ENCODE measurements at regions of chr20 and their contacts with region 1.

Region 1: GRCh38 chr20:5529331-5530148 is 212.8 kb upstream of the PROKR2 start:
- DNase-seq: peak; percentile 58 to 89 (median 83)
- ATAC-seq: peak; percentile 87 to 90 (median 88)
- H3K4me3 ChIP-seq: no peak overlapping the region
- H3K4me3 Mint-ChIP-seq: peak overlapping the region in 2 of 3 donors; percentile 41 to 67
- H3K27ac ChIP-seq: no peak overlapping the region
- H3K27ac Mint-ChIP-seq: peak overlapping the region; percentile 45 to 57
- H3K4me1 ChIP-seq: peaks cover 5 to 12% of the 10 kb centered on the region in 2 experiments
- H3K4me1 Mint-ChIP-seq: peaks cover 17 to 23% (median 20%) of the 10 kb centered on the region in 3 donors
- H3K27me3 ChIP-seq: no peaks in the 10 kb centered on the region
- H3K27me3 Mint-ChIP-seq: no peaks in the 10 kb centered on the region

Region 2: GRCh38 chr20:4808872-4809271 is 720.7 kb before region 1 on chr20:
- CTCF ChIA-PET with region 1: no interaction called
- POLR2A ChIA-PET with region 1: interaction called in 1 of 2 experiments, 10 read pairs
- DNase-seq: peak in 1 of 35 experiments; percentile 9
- ATAC-seq: no peak
- H3K4me3 ChIP-seq: no peak overlapping the region
- H3K4me3 Mint-ChIP-seq: peak overlapping the region in 2 of 3 donors; percentile 52 to 81
- H3K27ac ChIP-seq: peak overlapping the region; percentile 4
- H3K27ac Mint-ChIP-seq: peak overlapping the region; percentile 97 to 98
- H3K4me1 ChIP-seq: peaks cover 57 to 68% of the 10 kb centered on the region in 2 experiments
- H3K4me1 Mint-ChIP-seq: peaks cover 78 to 88% (median 84%) of the 10 kb centered on the region in 3 donors
- H3K27me3 ChIP-seq: no peaks in the 10 kb centered on the region
- H3K27me3 Mint-ChIP-seq: no peaks in the 10 kb centered on the region

Region 3: DNA sequence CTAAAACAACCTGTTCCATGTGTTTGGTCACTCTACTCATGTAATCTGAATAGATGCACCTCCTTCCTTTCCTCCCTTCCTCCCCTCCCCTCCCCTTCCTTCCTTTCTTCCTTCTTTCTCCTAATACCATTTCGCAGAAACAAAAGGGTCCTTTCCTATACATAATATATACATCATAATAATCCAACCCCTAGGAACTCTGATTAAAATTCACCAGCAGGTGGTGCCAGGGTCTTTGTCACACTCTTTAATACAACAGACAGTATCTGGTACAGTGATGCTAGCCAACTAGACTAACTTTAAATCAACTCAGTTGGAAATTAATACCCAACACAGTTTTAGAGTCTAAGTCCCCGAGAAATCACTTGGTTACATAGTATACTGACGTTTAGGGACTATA is 39.5 kb after region 1 on chr20:
- CTCF ChIA-PET with region 1: interaction called, 3 to 18 read pairs
- POLR2A ChIA-PET with region 1: no interaction called
- DNase-seq: peak in 33 of 35 experiments; percentile 7 to 76 (median 47)
- ATAC-seq: peak; percentile 74 to 82 (median 78)
- H3K4me3 ChIP-seq: no peak overlapping the region
- H3K4me3 Mint-ChIP-seq: peak overlapping the region in 1 of 3 donors; percentile 65
- H3K27ac ChIP-seq: no peak overlapping the region
- H3K27ac Mint-ChIP-seq: peak overlapping the region; percentile 18 to 80
- H3K4me1 ChIP-seq: peaks cover 0 to 22% of the 10 kb centered on the region in 2 experiments
- H3K4me1 Mint-ChIP-seq: peaks cover 21 to 36% (median 35%) of the 10 kb centered on the region in 3 donors
- H3K27me3 ChIP-seq: no peaks in the 10 kb centered on the region
- H3K27me3 Mint-ChIP-seq: no peaks in the 10 kb centered on the region

Region 4: GRCh38 chr20:5788385-5788895 is 258.9 kb after region 1 on chr20:
- CTCF ChIA-PET with region 1: interaction called, 18 to 44 read pairs
- POLR2A ChIA-PET with region 1: interaction called in 1 of 2 experiments, 7 read pairs
- DNase-seq: peak; percentile 19 to 93 (median 73)
- ATAC-seq: peak; percentile 87 to 99 (median 96)
- H3K4me3 ChIP-seq: no peak overlapping the region
- H3K4me3 Mint-ChIP-seq: no peak overlapping the region
- H3K27ac ChIP-seq: no peak overlapping the region
- H3K27ac Mint-ChIP-seq: peak overlapping the region in 1 of 2 donors; percentile 2
- H3K4me1 ChIP-seq: no peaks in the 10 kb centered on the region
- H3K4me1 Mint-ChIP-seq: peaks cover 0 to 15% (median 8%) of the 10 kb centered on the region in 3 donors
- H3K27me3 ChIP-seq: no peaks in the 10 kb centered on the region
- H3K27me3 Mint-ChIP-seq: no peaks in the 10 kb centered on the region

Region 5: GRCh38 chr20:6074145-6074561 is 544.6 kb after region 1 on chr20:
- CTCF ChIA-PET with region 1: interaction called, 15 to 36 read pairs
- POLR2A ChIA-PET with region 1: no interaction called
- DNase-seq: peak in 1 of 35 experiments; percentile 28
- ATAC-seq: peak in 3 of 4 experiments; percentile 37 to 66 (median 56)
- H3K4me3 ChIP-seq: no peak overlapping the region
- H3K4me3 Mint-ChIP-seq: no peak overlapping the region
- H3K27ac ChIP-seq: no peak overlapping the region
- H3K27ac Mint-ChIP-seq: no peak overlapping the region
- H3K4me1 ChIP-seq: peaks cover 0 to 4% of the 10 kb centered on the region in 2 experiments
- H3K4me1 Mint-ChIP-seq: peaks cover 0 to 6% (median 0%) of the 10 kb centered on the region in 3 donors
- H3K27me3 ChIP-seq: peaks cover 0 to 14% of the 10 kb centered on the region in 2 experiments
- H3K27me3 Mint-ChIP-seq: peaks cover 0 to 8% of the 10 kb centered on the region in 2 donors